HEK293 (cell line): ENCODE measurements at regions of chr18 and their contacts with region 1.

Region 1: DNA sequence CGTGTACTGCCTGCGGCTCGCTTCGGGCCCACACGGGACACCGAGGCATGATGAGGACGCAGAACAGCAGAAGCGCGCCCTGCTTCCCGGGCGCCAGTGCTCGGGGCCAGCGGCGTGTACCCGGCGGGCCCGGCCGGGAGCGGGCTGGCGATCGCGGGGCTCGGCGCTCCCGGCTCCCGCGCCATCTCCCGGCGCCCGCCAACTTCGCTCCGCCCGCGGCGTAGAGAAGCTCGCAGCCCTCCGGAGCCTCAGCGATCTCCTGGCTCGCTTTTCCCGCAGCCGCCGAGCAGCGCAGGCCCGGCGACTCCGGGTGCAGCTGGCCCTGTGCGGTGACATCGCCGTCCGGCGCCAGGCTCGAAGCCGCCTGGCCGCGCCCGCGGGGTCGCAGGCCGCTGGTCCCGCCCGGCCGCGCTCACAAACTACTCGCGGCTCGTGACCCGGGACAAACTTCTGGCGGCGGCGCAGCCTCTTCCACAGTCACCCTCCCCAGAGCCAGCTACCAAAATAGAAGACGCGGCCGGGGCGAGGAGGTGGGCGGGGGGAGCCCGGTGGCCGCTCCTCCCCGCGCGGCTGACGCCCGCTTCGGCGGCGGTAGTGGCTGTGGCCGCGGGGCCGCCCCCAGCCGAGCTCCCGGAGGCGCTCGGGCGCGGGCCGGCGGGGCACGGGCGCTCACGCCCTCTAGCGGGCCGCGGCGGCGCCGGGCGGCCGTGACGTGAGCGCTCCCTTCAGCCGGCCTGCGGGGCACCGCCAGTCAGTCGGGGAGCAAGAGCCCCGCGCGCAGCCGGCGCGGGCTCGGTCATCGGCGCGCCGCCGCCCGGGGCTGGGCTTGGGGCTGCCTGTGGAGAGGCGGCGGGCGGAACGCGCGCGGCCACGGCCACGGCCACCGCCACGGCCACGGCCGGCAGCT is at the start of gene PTPRM:
- H3K4me3 ChIP-seq: peak within 1 kb of the TSS; percentile 60
- H3K27ac ChIP-seq: peak within 1 kb of the TSS; percentile 94
- H3K4me1 ChIP-seq: peaks cover 6% of the 10 kb centered on the region; the same call in 1 of the 2 replicates
- CTCF ChIP-seq: no peak

Region 2: GRCh38 chr18:7272311-7273049 is 294.3 kb before region 1 on chr18:
- CTCF ChIA-PET with region 1: interaction called, 23 read pairs
- POLR2A ChIA-PET with region 1: interaction called, 6 read pairs
- H3K4me3 ChIP-seq: no peak overlapping the region
- H3K27ac ChIP-seq: no peak overlapping the region
- H3K4me1 ChIP-seq: no peaks in the 10 kb centered on the region
- CTCF ChIP-seq: no peak

Region 3: GRCh38 chr18:7544686-7545085 is 22.1 kb before region 1 on chr18:
- CTCF ChIA-PET with region 1: interaction called, 10 read pairs
- POLR2A ChIA-PET with region 1: no interaction called
- H3K4me3 ChIP-seq: no peak overlapping the region
- H3K27ac ChIP-seq: no peak overlapping the region
- H3K4me1 ChIP-seq: no peaks in the 10 kb centered on the region
- CTCF ChIP-seq: no peak

Region 4: GRCh38 chr18:7592305-7593071 is 25.7 kb after region 1 on chr18:
- CTCF ChIA-PET with region 1: interaction called, 11 read pairs
- POLR2A ChIA-PET with region 1: interaction called, 6 read pairs
- H3K4me3 ChIP-seq: no peak overlapping the region
- H3K27ac ChIP-seq: no peak overlapping the region
- H3K4me1 ChIP-seq: peaks cover 22% of the 10 kb centered on the region
- CTCF ChIP-seq: 0 out of 2 replicates have a peak, but pooled peaks have one; percentile 24